ENCODE measurements at regions of chr5 and their contacts with region 1.

Region 1: GRCh38 chr5:64625678-64626077 is 64.6 kb upstream of the SHISAL2B start:
- DNase-seq: no peak
- ATAC-seq: no peak
- H3K4me3 Mint-ChIP-seq: no peak overlapping the region
- H3K27ac Mint-ChIP-seq: no peak overlapping the region
- H3K4me1 Mint-ChIP-seq: no peaks in the 10 kb centered on the region
- H3K27me3 Mint-ChIP-seq: peaks cover 41% of the 10 kb centered on the region

Region 2: GRCh38 chr5:64666078-64666477 is 40.4 kb after region 1 on chr5:
- CTCF ChIA-PET with region 1: no interaction called
- POLR2A ChIA-PET with region 1: no interaction called
- intact Hi-C with region 1: loop called in 1 of 2 experiments (anchors 1 kb)
- DNase-seq: no peak
- ATAC-seq: no peak
- H3K4me3 Mint-ChIP-seq: no peak overlapping the region
- H3K27ac Mint-ChIP-seq: no peak overlapping the region
- H3K4me1 Mint-ChIP-seq: no peaks in the 10 kb centered on the region
- H3K27me3 Mint-ChIP-seq: peaks cover 12% of the 10 kb centered on the region

Region 3: GRCh38 chr5:65076251-65076869 is 450.7 kb after region 1 on chr5:
- CTCF ChIA-PET with region 1: no interaction called
- POLR2A ChIA-PET with region 1: no interaction called
- intact Hi-C with region 1: no loop called
- DNase-seq: peak; percentile 74
- ATAC-seq: peak; percentile 99
- H3K4me3 Mint-ChIP-seq: no peak overlapping the region
- H3K27ac Mint-ChIP-seq: no peak overlapping the region
- H3K4me1 Mint-ChIP-seq: peaks cover 11% of the 10 kb centered on the region
- H3K27me3 Mint-ChIP-seq: peaks cover 8% of the 10 kb centered on the region